CD4-positive, alpha-beta T cell (primary cell): ENCODE measurements at regions of chr2 and their contacts with region 1.

Region 1: DNA sequence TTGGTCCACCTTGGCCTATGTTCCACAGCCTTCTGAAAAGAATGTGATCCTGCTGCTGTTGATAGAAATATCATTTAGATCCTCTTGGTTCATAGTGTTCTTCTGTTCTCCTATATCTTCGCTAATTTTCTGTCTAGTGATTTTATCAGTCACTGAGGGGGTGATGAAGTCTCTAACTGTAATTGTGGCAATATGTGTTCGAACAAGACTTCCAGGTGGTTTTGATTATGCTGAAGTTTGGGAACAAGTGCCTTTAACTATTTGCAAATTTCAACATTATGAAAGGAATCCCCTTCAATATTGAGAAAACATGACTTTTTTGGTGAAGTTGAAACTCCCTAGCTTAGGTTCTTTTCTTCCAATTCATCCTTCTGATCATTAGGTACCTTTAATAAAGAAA is 140.4 kb downstream of the MTX2 start:
- DNase-seq: no peak
- ATAC-seq: no peak
- H3K4me3 ChIP-seq: no peak overlapping the region
- H3K4me3 Mint-ChIP-seq: no peak overlapping the region
- H3K27ac ChIP-seq: no peak overlapping the region
- H3K27ac Mint-ChIP-seq: no peak overlapping the region
- H3K4me1 ChIP-seq: no peaks in the 10 kb centered on the region
- H3K4me1 Mint-ChIP-seq: no peaks in the 10 kb centered on the region
- H3K27me3 ChIP-seq: peaks cover 4 to 20% of the 10 kb centered on the region in 2 experiments
- H3K27me3 Mint-ChIP-seq: peaks cover 80% of the 10 kb centered on the region
- CTCF ChIP-seq: no peak

Region 2: GRCh38 chr2:175630280-175631244 is 779.1 kb before region 1 on chr2:
- CTCF ChIA-PET with region 1: no interaction called
- POLR2A ChIA-PET with region 1: no interaction called
- intact Hi-C with region 1: no loop called
- DNase-seq: no peak
- ATAC-seq: no peak
- H3K4me3 ChIP-seq: no peak overlapping the region
- H3K4me3 Mint-ChIP-seq: no peak overlapping the region
- H3K27ac ChIP-seq: no peak overlapping the region
- H3K27ac Mint-ChIP-seq: no peak overlapping the region
- H3K4me1 ChIP-seq: no peaks in the 10 kb centered on the region
- H3K4me1 Mint-ChIP-seq: no peaks in the 10 kb centered on the region
- H3K27me3 ChIP-seq: peaks cover 0 to 8% of the 10 kb centered on the region in 2 experiments
- H3K27me3 Mint-ChIP-seq: peaks cover 10% of the 10 kb centered on the region
- CTCF ChIP-seq: no peak

Region 3: GRCh38 chr2:176398243-176399073 is 11.2 kb before region 1 on chr2:
- CTCF ChIA-PET with region 1: no interaction called
- POLR2A ChIA-PET with region 1: no interaction called
- intact Hi-C with region 1: loop called (anchors 1 to 2 kb)
- DNase-seq: no peak
- ATAC-seq: no peak
- H3K4me3 ChIP-seq: no peak overlapping the region
- H3K4me3 Mint-ChIP-seq: no peak overlapping the region
- H3K27ac ChIP-seq: no peak overlapping the region
- H3K27ac Mint-ChIP-seq: no peak overlapping the region
- H3K4me1 ChIP-seq: no peaks in the 10 kb centered on the region
- H3K4me1 Mint-ChIP-seq: no peaks in the 10 kb centered on the region
- H3K27me3 ChIP-seq: no peaks in the 10 kb centered on the region
- H3K27me3 Mint-ChIP-seq: peaks cover 48% of the 10 kb centered on the region
- CTCF ChIP-seq: no peak